Right ventricle myocardium superior (tissue), 1 donor: ENCODE measurements at regions of chr20 and their contacts with region 1.

Region 1: GRCh38 chr20:50929299-50930138 is 1.7 kb downstream of the ADNP start:
- DNase-seq: peak; percentile 89
- ATAC-seq: peak; percentile 43

Region 2: DNA sequence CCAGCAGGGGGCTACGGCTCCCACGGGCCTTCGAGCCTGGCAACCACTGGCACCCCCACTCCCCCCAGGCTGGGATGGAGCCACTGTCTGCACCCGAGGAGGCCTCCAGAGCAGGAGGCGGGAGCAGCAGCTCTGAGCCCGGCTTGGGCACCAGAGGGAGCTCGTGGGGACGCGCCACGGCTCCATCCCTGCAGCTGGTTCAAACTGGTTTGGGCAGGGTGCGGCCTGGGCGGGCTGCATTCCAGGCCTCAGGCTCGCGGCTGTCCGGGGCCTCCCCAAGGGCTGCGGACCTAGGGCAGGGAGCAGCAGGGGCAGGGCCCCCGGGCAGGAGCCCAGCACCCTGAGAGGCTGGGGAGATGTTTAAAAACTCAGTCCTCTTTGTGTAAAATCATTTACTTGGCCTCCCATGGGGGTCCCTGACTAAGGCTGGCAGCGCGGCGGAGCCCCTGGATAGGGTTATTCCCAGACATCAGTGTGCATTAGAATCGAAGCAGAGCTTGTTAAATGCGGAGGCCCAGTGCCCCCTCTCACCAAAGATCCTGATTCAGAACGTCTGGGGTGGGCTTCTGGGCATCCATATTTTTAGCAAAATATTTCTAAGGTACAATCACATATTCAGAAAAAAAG is 138.8 kb before region 1 on chr20:
- intact Hi-C with region 1: loop called (anchors 5 kb)
- DNase-seq: peak; percentile 91
- ATAC-seq: peak; percentile 85

Region 3: GRCh38 chr20:50804418-50805064 is 125.0 kb before region 1 on chr20:
- intact Hi-C with region 1: no loop called
- DNase-seq: no peak
- ATAC-seq: no peak

Region 4: GRCh38 chr20:51067792-51068191 is 138.3 kb after region 1 on chr20:
- intact Hi-C with region 1: no loop called
- DNase-seq: no peak
- ATAC-seq: no peak